A673 (cell line): ENCODE measurements at regions of chr2 and their contacts with region 1.

Region 1: DNA sequence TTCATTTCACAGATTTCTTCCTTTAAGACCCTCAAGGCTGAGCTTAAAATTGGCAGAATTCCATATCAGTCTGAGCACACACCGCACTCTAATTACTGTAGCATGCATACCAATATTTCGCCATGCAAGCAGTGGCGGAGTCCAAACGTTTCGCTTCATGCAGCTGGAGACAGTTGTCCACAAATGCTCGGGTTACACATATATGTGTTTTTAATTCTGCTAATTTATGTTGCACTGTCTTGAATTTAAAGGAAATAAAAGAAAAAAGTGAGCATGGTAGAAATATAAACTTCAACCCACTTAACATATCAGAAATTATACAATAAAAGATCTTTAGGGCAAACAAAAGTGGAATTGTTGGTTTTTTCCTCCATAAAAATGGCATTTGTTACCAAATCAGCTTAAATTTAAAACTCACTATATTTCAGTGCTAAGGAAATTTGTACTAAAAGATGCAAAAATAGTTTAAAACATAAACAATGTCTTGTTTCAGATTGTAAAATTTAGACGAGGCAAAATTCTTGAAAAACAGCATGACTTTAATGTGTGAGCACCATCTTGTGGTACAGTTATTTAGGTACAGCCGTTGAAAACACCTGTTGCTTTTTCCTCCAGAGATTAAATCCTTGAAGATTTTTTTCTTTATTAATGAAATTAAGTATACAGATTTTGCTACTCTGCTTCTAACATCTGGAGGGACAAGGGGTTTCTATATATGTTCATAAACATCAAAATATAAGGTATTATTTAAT is 24.1 kb upstream of the KANSL1L start:
- DNase-seq: peak; percentile 67
- H3K4me3 ChIP-seq: peak overlapping the region; percentile 36
- H3K27ac ChIP-seq: no peak overlapping the region
- H3K4me1 ChIP-seq: peaks cover 24% of the 10 kb centered on the region
- H3K27me3 ChIP-seq: no peaks in the 10 kb centered on the region
- CTCF ChIP-seq: peak; percentile 79

Region 2: DNA sequence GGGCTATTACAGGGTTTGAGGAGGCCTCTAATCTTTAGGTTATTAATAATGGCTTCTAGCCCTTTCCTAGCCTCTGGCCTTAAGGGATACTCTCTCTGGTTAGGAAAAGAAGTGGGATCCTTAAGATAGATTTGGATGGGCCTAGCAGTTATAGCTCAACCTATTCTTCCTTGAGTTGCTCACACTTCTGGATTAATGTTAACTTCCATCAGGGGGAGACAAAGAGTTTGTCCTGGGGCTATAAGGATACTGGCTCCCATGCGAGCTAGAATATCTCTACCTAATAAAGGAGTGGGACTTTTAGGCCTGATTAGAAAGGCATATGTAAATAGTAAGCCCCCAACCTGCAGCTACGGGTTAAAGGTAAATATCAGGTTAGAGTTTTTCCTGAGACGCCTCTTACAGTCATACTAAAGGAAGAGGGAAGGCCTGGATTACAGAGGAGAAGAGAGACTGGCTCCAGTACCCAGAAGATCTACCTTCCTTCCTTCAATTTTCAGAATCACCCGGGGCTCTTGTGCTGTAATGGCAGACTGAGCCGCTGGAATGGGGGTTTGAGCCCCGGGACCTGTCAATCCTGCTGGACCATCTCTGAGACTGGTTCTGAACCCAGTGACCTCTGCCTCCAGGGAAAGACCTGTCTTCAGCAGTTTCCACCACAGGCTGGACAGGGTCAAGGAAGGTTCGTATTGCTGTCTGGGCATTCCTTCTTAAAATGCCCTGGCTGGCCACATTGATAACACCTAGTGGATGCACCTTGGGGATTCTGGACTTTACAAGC is 1802.8 kb before region 1 on chr2:
- CTCF ChIA-PET with region 1: no interaction called
- POLR2A ChIA-PET with region 1: no interaction called
- intact Hi-C with region 1: loop called (anchors 10 kb)
- DNase-seq: peak; percentile 18
- H3K4me3 ChIP-seq: no peak overlapping the region
- H3K27ac ChIP-seq: no peak overlapping the region
- H3K4me1 ChIP-seq: no peaks in the 10 kb centered on the region
- H3K27me3 ChIP-seq: no peaks in the 10 kb centered on the region
- CTCF ChIP-seq: peak; percentile 46

Region 3: DNA sequence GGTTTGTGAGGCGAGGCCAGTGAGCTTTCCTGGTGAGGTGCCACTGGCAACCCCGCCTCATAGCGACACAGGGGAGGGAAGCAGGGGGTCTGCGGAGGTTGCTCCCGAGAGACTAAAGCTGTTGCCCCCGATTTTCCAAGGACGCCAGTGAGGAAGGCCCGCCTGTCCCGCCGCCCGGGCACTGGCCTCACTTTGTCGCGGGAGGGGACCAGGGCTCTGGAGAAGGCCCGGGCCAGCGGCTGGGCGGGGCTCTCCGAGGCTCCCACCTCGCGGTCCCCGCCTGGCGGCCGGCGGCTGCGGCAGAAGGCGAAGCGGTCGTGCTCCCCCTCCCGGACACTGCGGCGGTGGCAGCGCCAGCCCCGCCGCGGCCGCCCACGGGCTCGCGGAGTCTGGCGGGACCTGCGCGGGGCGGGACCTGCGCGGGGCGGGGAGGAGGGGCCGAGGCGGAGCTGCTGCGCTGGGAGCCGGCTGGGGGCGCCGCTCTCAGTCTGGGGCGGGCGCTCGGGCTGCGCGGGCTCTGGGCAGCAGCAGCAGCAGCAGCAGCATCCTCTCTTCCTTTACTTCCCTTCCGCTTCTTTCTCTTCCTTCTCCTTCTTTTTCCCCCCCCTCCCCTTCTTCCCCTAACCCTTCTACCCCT is 771.6 kb before region 1 on chr2 and contains the start of gene MAP2:
- CTCF ChIA-PET with region 1: no interaction called
- POLR2A ChIA-PET with region 1: no interaction called
- intact Hi-C with region 1: loop called (anchors 2 kb)
- DNase-seq: peak; percentile 89
- H3K4me3 ChIP-seq: peak within 1 kb of the TSS; percentile 54
- H3K27ac ChIP-seq: no peak within 1 kb of the TSS
- H3K4me1 ChIP-seq: peaks cover 14% of the 10 kb centered on the region
- H3K27me3 ChIP-seq: no peaks in the 10 kb centered on the region
- CTCF ChIP-seq: peak; percentile 59
- total RNA-seq, gene MAP2: 1.7 and 2.0 TPM in 2 replicates

Region 4: DNA sequence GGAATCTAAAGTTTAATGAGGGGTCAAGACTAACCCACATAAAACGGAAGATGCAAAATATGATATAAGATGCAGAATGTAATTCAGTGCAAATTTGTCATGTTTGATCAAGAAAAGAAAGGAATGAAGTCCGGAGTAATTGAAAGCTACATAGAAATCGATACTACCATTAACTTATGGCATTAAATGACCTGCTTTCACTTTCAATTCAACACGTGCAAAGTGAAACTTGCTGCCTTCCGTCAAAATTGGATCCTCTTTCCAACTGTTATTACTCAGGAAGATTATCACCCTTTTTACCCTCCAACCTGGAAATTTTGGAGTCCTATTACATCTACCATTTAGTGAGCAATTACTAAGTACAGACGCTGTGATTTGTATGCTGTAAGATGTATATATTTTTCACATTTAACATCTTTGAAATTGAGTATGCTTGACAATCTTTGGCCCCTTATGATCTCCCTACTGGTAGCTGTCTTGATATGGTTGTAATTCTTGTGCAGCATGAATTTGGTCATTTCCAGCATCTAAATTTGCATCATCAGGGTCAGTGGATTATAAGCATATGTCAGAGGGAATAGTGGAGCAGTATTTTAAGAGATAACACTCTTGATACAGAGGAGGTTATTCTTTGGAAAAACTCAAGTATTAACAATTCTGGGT is 405.1 kb before region 1 on chr2:
- CTCF ChIA-PET with region 1: no interaction called
- POLR2A ChIA-PET with region 1: no interaction called
- intact Hi-C with region 1: loop called (anchors 2 kb)
- DNase-seq: no peak
- H3K4me3 ChIP-seq: no peak overlapping the region
- H3K27ac ChIP-seq: no peak overlapping the region
- H3K4me1 ChIP-seq: no peaks in the 10 kb centered on the region
- H3K27me3 ChIP-seq: no peaks in the 10 kb centered on the region
- CTCF ChIP-seq: no peak

Region 5: GRCh38 chr2:209977386-209978239 is 217.7 kb before region 1 on chr2:
- CTCF ChIA-PET with region 1: no interaction called
- POLR2A ChIA-PET with region 1: no interaction called
- intact Hi-C with region 1: loop called (anchors 1 kb)
- DNase-seq: peak; percentile 60
- H3K4me3 ChIP-seq: no peak overlapping the region
- H3K27ac ChIP-seq: no peak overlapping the region
- H3K4me1 ChIP-seq: no peaks in the 10 kb centered on the region
- H3K27me3 ChIP-seq: no peaks in the 10 kb centered on the region
- CTCF ChIP-seq: peak; percentile 59

Region 6: GRCh38 chr2:210421916-210422315 is 226.6 kb after region 1 on chr2:
- CTCF ChIA-PET with region 1: no interaction called
- POLR2A ChIA-PET with region 1: no interaction called
- intact Hi-C with region 1: no loop called
- DNase-seq: no peak
- H3K4me3 ChIP-seq: no peak overlapping the region
- H3K27ac ChIP-seq: no peak overlapping the region
- H3K4me1 ChIP-seq: no peaks in the 10 kb centered on the region
- H3K27me3 ChIP-seq: no peaks in the 10 kb centered on the region
- CTCF ChIP-seq: no peak